Mammary epithelial cell (primary cell): ENCODE measurements at regions of chr6 and their contacts with region 1.

Region 1: GRCh38 chr6:107989166-107990094 is 31.4 kb upstream of the SEC63 start:
- DNase-seq: no peak
- H3K4me3 ChIP-seq: no peak overlapping the region
- H3K27ac ChIP-seq: no peak overlapping the region
- H3K4me1 ChIP-seq: peaks cover 18% of the 10 kb centered on the region
- H3K27me3 ChIP-seq: no peaks in the 10 kb centered on the region
- CTCF ChIP-seq: no peak

Region 2: DNA sequence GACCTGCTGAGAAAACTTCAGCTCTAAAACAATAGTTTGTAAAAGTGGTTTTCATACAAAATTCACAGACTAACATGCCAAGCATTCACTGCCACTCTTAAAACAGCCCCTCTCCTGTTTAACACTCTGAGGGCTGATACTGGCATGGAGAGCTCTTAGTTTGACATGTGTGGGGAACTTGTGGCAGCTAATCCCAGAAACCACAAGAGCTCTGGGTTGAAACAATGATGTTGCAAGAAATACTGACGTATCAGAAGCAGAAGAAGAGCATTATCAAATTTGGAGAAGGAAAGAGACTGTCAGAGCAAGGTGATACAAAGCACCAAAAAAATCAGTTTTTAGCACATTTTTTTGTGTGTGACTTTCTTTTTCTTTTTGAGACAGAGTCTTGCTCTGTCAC is 879.2 kb before region 1 on chr6:
- CTCF ChIA-PET with region 1: no interaction called
- dilution Hi-C with region 1: no loop called
- in situ Hi-C with region 1: no loop called
- intact Hi-C with region 1: no loop called
- DNase-seq: peak; percentile 12
- H3K4me3 ChIP-seq: no peak overlapping the region
- H3K27ac ChIP-seq: no peak overlapping the region
- H3K4me1 ChIP-seq: peaks cover 9% of the 10 kb centered on the region
- H3K27me3 ChIP-seq: no peaks in the 10 kb centered on the region
- CTCF ChIP-seq: no peak

Region 3: DNA sequence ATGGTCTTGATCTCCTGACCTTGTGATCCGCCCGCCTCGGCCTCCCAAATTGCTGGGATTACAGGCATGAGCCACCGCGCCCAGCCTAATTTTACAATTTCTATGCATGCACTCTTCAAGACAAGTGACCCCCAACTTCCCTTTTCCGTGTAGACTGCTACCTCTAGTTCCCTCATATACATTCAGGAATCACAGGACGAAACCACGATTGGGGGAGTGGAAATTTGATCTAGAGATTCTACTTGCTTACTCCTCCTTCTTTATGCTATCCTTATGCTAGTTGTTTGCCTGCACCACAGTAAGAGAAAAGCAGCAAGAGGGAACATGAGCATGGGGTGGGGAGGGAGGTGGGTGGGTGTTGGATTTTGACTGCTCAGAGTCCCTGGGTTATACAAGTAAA is 50.3 kb after region 1 on chr6:
- CTCF ChIA-PET with region 1: no interaction called
- dilution Hi-C with region 1: no loop called
- in situ Hi-C with region 1: loop called in 1 of 2 experiments (anchors 10 kb)
- intact Hi-C with region 1: no loop called
- DNase-seq: no peak
- H3K4me3 ChIP-seq: no peak overlapping the region
- H3K27ac ChIP-seq: no peak overlapping the region
- H3K4me1 ChIP-seq: no peaks in the 10 kb centered on the region
- H3K27me3 ChIP-seq: no peaks in the 10 kb centered on the region
- CTCF ChIP-seq: no peak